Activated naive CD4-positive, alpha-beta T cell treated with anti-CD3 and anti-CD28 coated beads for 36 hours (primary cell): ENCODE measurements at regions of chr6 and their contacts with region 1.

Region 1: DNA sequence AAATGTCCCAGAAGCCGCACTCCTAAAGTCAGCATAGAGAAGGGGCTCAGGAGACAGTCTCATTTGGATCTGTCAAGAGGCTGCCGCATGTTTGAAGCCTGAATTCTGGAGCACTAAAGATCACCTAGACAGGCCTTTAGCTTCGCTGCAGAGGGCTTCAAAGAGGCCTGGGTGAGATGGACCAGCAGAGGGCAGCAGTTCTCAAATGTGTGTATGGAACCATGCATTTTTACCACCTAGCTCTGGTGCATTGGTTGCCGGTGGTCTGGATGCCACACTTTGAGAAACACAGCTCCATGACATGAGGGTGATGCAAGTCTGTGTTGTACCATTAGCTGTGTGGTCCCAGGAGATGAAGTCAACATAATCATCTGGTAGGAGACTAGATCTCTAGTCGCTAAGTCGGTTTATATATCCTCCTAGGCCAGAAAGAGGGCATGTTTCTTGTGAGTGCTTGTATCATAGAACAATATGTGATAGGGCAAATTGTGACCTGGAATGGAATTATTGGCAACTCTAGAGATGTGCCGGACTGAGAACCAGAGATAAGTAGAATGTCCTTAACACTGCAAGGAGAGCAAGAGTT is 64.8 kb downstream of the KIAA0319 start:
- DNase-seq: peak; percentile 91
- H3K4me3 Mint-ChIP-seq: no peak overlapping the region
- H3K27ac Mint-ChIP-seq: no peak overlapping the region
- H3K4me1 Mint-ChIP-seq: peaks cover 2% of the 10 kb centered on the region
- H3K27me3 Mint-ChIP-seq: peaks cover 3% of the 10 kb centered on the region

Region 2: DNA sequence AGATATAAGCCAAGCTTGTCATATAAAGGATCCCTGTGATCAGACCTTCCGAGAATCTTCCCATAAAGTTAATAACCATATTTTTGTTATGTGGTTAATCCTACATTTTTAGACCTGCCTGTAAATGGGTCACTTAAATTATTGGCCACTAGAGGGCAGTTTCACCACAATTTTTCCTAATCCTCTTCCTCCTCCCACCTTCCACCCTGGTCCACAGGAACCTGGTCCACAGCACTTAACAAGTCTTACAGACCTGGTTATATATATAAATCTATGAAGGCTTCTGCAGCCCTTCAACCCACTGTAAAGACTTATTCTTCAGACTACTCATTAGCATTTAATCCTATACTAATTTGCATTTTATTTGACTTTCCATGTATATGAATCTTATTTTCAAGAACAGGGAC is 150.1 kb before region 1 on chr6:
- CTCF ChIA-PET with region 1: interaction called, 4 read pairs
- intact Hi-C with region 1: loop called (anchors 2 kb)
- DNase-seq: peak; percentile 36
- H3K4me3 Mint-ChIP-seq: no peak overlapping the region
- H3K27ac Mint-ChIP-seq: no peak overlapping the region
- H3K4me1 Mint-ChIP-seq: no peaks in the 10 kb centered on the region
- H3K27me3 Mint-ChIP-seq: no peaks in the 10 kb centered on the region

Region 3: DNA sequence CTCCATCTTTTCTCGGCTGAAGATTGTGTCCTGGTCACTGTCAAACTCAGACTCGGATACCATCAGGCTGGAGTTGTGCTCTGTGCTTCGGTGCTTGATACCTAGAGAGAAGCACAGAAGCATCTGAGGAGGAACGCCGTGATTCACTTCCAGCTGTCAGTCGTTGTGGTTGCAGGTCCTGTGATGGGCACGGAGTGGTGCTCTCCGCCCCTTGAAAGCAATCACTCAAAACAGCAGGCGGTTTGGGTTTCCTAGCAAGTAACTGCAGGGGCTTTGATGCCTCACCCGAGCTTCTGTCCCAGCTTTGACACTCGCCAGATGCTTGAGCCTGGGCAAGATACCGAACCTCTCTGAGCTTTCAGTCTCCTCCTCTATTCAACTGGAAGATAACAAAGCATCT is 33.9 kb before region 1 on chr6:
- CTCF ChIA-PET with region 1: interaction called, 16 read pairs
- intact Hi-C with region 1: loop called (anchors 1 kb)
- DNase-seq: peak; percentile 81
- H3K4me3 Mint-ChIP-seq: no peak overlapping the region
- H3K27ac Mint-ChIP-seq: no peak overlapping the region
- H3K4me1 Mint-ChIP-seq: peaks cover 8% of the 10 kb centered on the region
- H3K27me3 Mint-ChIP-seq: peaks cover 5% of the 10 kb centered on the region

Region 4: GRCh38 chr6:24646782-24647181 is 65.6 kb after region 1 on chr6:
- CTCF ChIA-PET with region 1: interaction called, 10 read pairs
- intact Hi-C with region 1: no loop called
- DNase-seq: no peak
- H3K4me3 Mint-ChIP-seq: peak overlapping the region; percentile 84
- H3K27ac Mint-ChIP-seq: no peak overlapping the region
- H3K4me1 Mint-ChIP-seq: peaks cover 13% of the 10 kb centered on the region
- H3K27me3 Mint-ChIP-seq: peaks cover 13% of the 10 kb centered on the region

Region 5: DNA sequence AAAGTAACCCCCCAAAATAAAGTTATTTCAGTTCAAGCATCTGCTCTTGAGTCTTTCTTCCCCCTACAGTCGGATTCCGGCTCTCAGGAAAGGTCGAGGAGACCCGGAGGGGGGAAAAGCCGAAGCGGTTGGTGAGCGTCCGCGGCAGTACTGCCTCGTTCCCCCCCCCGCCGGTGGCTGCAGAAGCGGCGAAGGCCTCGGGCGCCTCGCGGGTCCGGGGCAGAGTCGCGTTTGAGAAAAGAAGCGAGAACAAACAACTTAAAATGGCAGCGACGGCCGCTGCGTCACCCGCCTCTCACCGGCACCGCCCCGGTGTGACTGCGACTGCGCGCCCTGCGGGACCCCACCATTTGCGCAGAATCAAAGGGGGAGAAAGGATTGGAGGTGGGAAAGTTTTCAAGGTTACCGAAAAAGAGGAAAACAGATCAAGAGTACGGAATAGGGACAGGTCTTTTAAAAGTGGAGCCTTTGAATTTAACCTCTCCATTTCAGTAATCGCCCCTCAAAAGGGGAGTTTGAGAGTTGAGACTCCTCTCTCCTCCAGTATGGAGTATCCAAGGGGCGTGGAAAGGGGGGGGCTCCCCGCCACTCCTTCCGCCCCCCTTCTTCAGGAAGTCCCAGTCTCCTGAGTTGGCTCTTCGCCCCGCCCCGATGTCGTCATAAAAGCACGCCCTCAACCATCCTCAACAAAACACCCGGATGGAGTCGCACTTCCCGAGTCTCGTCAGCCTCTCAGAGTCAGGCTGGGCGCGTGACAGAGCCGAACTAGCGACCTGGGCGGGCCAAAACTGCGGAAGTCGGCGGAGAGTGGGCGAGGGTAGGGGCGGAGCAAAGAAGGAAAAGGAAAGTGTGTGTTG is 139.7 kb after region 1 on chr6:
- CTCF ChIA-PET with region 1: interaction called, 11 read pairs
- intact Hi-C with region 1: no loop called
- DNase-seq: peak; percentile 100
- H3K4me3 Mint-ChIP-seq: peak overlapping the region; percentile 99
- H3K27ac Mint-ChIP-seq: peak overlapping the region; percentile 95
- H3K4me1 Mint-ChIP-seq: peaks cover 29% of the 10 kb centered on the region
- H3K27me3 Mint-ChIP-seq: no peaks in the 10 kb centered on the region

Region 6: DNA sequence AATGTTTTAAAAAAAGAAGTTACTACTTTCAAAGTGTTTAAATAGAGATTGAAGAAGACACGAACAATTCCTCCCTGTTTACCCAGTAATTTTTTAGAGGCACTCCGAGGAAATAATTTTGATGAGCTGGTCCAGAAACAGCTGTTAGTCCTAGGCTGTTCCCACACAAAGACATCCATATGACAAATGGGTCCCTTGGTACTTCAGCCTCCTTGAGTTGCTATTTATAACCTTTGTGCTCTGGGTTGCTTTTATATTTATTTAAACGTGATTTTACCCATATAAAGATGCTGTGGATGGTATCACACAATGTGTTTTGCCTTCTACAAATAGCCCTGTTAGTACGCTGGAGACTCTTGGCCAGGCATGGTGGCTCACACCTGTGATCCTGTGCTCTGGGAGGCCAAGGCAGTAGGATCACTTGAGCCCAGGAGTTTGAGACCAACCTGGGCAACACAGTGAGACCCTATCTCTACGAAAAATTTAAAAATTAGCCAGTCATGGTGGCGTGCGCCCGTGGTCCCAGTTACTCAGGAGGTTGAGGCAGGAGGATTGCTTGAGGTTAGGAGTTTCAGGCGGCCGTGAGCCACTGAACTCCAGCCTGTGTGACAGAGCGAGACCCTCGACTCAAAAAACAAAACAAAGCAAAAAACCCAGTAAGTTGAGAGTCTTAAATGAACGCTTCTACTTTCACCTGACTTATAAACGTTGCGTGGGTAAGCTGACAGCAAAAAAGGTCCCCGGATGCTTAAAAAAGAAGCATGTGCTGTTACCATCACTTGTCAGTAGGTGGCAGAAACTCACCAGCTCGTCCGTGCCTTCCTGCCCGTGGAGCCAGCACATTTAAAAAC is 274.4 kb after region 1 on chr6:
- CTCF ChIA-PET with region 1: interaction called, 3 read pairs
- intact Hi-C with region 1: loop called (anchors 5 kb)
- DNase-seq: peak; percentile 85
- H3K4me3 Mint-ChIP-seq: peak overlapping the region; percentile 36
- H3K27ac Mint-ChIP-seq: peak overlapping the region; percentile 95
- H3K4me1 Mint-ChIP-seq: peaks cover 56% of the 10 kb centered on the region
- H3K27me3 Mint-ChIP-seq: no peaks in the 10 kb centered on the region